Mammary epithelial cell (primary cell): ENCODE measurements at regions of chr19 and their contacts with region 1.

Region 1: GRCh38 chr19:10269333-10270179 is 1.4 kb upstream of the ICAM1 start:
- DNase-seq: peak; percentile 54
- H3K4me3 ChIP-seq: peak overlapping the region in 1 of 3 experiments; percentile 33
- H3K27ac ChIP-seq: no peak overlapping the region
- H3K4me1 ChIP-seq: peaks cover 16% of the 10 kb centered on the region
- H3K27me3 ChIP-seq: no peaks in the 10 kb centered on the region
- CTCF ChIP-seq: peak; percentile 80 to 96

Region 2: GRCh38 chr19:9721861-9722260 is 547.7 kb before region 1 on chr19:
- CTCF ChIA-PET with region 1: no interaction called
- dilution Hi-C with region 1: no loop called
- in situ Hi-C with region 1: no loop called
- intact Hi-C with region 1: no loop called
- DNase-seq: peak; percentile 48
- H3K4me3 ChIP-seq: peak overlapping the region in 1 of 3 experiments; percentile 13
- H3K27ac ChIP-seq: peak overlapping the region; percentile 7
- H3K4me1 ChIP-seq: peaks cover 6% of the 10 kb centered on the region
- H3K27me3 ChIP-seq: no peaks in the 10 kb centered on the region
- CTCF ChIP-seq: no peak

Region 3: GRCh38 chr19:10305139-10305806 is 35.7 kb after region 1 on chr19:
- CTCF ChIA-PET with region 1: no interaction called
- dilution Hi-C with region 1: loop called (anchors 5 kb)
- in situ Hi-C with region 1: no loop called
- intact Hi-C with region 1: no loop called
- DNase-seq: no peak
- H3K4me3 ChIP-seq: no peak overlapping the region
- H3K27ac ChIP-seq: no peak overlapping the region
- H3K4me1 ChIP-seq: peaks cover 11% of the 10 kb centered on the region
- H3K27me3 ChIP-seq: no peaks in the 10 kb centered on the region
- CTCF ChIP-seq: no peak

Region 4: GRCh38 chr19:10315335-10316214 is 46.0 kb after region 1 on chr19 and contains the start of gene FDX2:
- CTCF ChIA-PET with region 1: no interaction called
- dilution Hi-C with region 1: no loop called
- in situ Hi-C with region 1: no loop called
- intact Hi-C with region 1: loop called (anchors 5 kb)
- DNase-seq: peak; percentile 80
- H3K4me3 ChIP-seq: peak within 1 kb of the TSS; percentile 43 to 73 (median 65)
- H3K27ac ChIP-seq: peak within 1 kb of the TSS; percentile 28
- H3K4me1 ChIP-seq: peaks cover 8% of the 10 kb centered on the region
- H3K27me3 ChIP-seq: no peaks in the 10 kb centered on the region
- CTCF ChIP-seq: no peak
- total RNA-seq, gene FDX2: 23.5 to 28.7 TPM

Region 5: DNA sequence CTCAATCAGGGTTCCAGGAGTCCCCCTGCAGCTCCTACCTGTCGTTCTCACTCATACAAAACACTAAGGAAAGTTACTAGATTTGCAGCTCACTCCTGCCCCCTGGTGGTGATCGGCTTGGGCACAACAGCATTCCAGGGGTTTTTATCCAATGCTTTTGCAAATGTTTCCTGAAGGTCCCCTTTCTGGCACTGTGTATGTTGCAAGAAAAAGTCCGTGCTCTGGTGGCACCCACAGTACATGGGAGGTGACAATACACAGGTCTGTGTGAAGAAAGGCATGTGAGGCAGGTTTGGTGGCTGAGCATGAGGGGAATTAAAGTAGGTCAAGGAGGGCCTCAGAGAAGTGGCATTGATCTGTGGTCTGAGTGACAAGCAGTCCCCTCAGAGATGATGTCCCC is 119.4 kb after region 1 on chr19:
- CTCF ChIA-PET with region 1: interaction called, 11 read pairs
- dilution Hi-C with region 1: no loop called
- in situ Hi-C with region 1: loop called (anchors 5 kb)
- intact Hi-C with region 1: loop called (anchors 1 kb)
- DNase-seq: peak; percentile 55
- H3K4me3 ChIP-seq: no peak overlapping the region
- H3K27ac ChIP-seq: no peak overlapping the region
- H3K4me1 ChIP-seq: no peaks in the 10 kb centered on the region
- H3K27me3 ChIP-seq: no peaks in the 10 kb centered on the region
- CTCF ChIP-seq: peak; percentile 92 to 95

Region 6: DNA sequence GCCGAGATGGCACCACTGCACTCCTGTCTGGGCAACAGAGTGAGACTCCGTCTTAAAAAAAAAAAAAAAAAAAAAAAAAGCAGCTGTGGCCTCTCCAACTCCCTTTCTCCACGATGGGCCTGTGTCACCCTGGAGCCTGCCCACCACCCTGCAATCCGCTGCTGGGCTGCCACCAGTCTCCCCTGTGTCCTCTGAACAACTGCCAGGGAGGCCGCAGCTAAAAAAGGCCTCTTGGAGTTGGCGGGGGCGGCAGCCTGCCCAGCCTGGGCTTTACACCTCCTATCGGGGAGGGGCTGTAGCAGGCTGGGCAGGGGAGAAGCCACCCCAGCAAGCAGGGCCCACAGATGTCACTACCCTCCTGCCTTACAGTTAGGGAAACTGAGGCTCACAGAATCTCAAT is 130.3 kb after region 1 on chr19:
- CTCF ChIA-PET with region 1: no interaction called
- dilution Hi-C with region 1: no loop called
- in situ Hi-C with region 1: no loop called
- intact Hi-C with region 1: no loop called
- DNase-seq: no peak
- H3K4me3 ChIP-seq: no peak overlapping the region
- H3K27ac ChIP-seq: no peak overlapping the region
- H3K4me1 ChIP-seq: peaks cover 21% of the 10 kb centered on the region
- H3K27me3 ChIP-seq: no peaks in the 10 kb centered on the region
- CTCF ChIP-seq: no peak